ENCODE measurements at regions of chr18 and their contacts with region 1.

Region 1: GRCh38 chr18:70454704-70455322 is 166.0 kb downstream of the SOCS6 start:
- DNase-seq: no peak
- ATAC-seq: peak in 3 of 4 donors; percentile 53 to 83 (median 70)
- H3K4me3 ChIP-seq: no peak overlapping the region
- H3K27ac ChIP-seq: no peak overlapping the region
- H3K4me1 ChIP-seq: no peaks in the 10 kb centered on the region
- H3K27me3 ChIP-seq: no peaks in the 10 kb centered on the region
- CTCF ChIP-seq: peak; percentile 70

Region 2: DNA sequence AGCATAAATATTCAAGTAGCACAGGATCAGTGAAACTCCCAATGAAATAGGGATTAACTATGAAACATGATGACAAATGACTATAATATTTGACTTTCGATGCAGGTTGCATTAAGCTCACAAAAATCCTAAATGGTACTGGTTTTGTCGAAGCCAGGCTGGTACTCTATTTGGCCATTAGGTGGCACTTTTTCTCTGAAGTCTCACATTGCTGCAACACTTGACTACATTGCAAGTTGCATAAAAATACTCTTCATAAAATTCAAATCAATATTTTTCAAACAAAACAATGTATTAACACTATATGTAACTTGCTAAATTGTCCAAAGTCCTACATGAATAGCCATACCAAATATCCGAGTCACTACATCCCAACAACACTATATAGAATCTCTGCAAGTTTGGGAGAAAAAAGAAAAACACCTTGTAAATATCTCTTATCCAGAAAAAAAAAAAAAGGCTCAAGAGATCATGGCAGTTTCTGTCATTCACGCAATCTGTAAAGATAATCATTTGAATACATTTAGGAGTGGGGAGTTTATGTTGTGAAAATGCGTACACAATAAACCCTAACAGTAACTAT is 258.9 kb before region 1 on chr18:
- intact Hi-C with region 1: loop called (anchors 5 kb)
- DNase-seq: no peak
- ATAC-seq: peak in 3 of 4 donors; percentile 40 to 83 (median 63)
- H3K4me3 ChIP-seq: no peak overlapping the region
- H3K27ac ChIP-seq: no peak overlapping the region
- H3K4me1 ChIP-seq: no peaks in the 10 kb centered on the region
- H3K27me3 ChIP-seq: no peaks in the 10 kb centered on the region
- CTCF ChIP-seq: peak; percentile 84